ENCODE measurements at regions of chr19 and their contacts with region 1.

Region 1: DNA sequence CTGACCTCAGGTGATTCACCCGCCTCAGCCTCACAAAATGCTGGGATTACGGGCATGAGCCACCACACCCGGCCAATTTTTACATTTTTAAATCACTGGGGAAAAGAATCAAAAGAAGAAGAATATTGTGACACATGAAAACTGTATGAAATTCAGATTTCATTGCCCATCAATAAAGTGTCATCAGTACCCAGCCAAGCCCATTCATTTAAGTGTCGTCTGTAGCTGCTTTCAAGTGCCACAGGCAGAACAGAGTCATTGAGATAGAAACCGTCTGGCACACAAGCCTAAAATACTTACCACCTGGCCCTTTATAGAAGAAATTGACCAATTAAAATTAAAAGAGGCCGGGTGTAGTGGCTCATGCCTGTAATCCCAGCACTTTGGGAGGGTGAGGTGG is 15.3 kb downstream of the COLGALT1 start:
- DNase-seq: no peak

Region 2: GRCh38 chr19:17450264-17451075 is 120.3 kb before region 1 on chr19:
- intact Hi-C with region 1: loop called (anchors 5 kb)
- DNase-seq: no peak

Measured in head of caudate nucleus (tissue), 42 donors.